ENCODE measurements at regions of chr1 and their contacts with region 1.

Region 1: DNA sequence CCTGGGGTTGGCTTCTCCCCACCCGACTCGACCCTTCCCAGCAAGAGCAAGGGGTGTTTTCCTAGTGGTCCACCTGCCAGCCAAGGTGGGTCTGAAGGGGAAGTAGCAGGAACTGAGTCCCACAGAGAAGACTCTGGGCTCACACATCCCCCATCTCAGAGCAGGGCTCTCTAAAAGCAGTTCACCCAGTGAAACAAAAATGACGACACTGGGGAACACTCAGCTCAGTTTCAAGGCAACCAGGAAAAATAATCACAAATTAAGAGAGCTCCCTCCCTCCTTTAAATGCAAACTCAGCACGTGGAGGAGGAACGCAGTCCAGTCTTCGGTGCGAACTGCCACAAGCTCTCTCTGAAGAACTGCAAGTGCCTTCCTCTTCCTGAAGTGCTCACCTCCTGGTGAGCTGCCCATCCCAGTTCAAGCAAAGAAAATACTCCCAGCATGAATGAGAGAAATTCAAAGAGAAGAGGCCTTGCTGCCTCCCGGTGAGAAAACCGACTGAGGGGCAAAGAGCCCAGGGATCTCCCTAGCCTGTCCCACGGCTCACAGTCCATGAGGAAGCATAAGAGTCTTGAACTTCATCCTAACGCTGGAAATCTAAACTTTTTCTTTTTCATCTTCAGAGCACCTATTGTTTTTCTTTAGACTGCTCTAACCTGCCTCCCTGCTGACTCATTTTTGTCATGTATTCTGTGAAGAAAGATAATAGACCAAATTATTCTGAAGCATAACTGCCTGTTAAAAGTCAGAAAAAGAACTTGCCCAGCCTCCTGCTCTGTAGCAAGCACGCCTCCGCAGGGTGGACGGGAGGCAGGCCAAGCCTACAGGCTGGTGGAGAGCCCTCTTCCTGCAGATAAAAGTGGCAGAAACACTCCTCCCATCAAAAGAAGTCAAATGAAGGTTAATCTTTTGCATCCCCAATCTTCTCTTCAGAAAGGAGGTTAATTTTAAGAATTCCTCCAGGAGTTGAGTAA is 281.4 kb downstream of the HHIPL2 start:
- DNase-seq: no peak
- ATAC-seq: peak in 1 of 2 donors; percentile 58

Region 2: DNA sequence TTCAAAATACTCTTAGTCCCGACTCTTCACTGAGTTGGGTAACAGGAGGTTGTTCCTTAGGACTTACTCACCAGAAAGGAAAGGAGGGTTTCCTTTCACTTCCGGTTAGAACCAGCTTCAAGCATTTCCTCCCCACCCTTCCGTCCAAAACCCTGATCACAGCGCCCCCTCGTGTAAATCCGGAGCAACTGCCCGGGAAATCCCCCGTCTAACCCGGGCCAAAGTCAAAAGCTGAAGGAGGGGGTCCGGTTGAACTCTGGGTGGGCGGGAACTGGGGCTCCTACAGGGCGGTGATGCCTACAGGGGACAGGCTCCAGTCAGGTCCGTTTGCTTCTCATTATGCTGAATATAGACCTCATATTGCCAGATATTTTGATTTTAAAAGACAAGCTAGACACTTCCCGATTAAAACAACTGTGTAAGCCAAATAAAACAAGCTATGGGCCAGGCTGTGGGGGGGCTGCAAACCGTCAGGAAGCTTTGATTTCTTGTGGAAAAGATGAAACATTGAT is 1533.4 kb before region 1 on chr1:
- intact Hi-C with region 1: no loop called
- DNase-seq: peak; percentile 79
- ATAC-seq: peak; percentile 94 to 96

Region 3: GRCh38 chr1:222329493-222330045 is 63.1 kb after region 1 on chr1:
- intact Hi-C with region 1: loop called in 1 of 2 experiments (anchors 10 kb)
- DNase-seq: no peak
- ATAC-seq: no peak

Measured in left cardiac atrium (tissue), 4 donors.